A549 (cell line): ENCODE measurements at regions of chr17 and their contacts with region 1.

Region 1: DNA sequence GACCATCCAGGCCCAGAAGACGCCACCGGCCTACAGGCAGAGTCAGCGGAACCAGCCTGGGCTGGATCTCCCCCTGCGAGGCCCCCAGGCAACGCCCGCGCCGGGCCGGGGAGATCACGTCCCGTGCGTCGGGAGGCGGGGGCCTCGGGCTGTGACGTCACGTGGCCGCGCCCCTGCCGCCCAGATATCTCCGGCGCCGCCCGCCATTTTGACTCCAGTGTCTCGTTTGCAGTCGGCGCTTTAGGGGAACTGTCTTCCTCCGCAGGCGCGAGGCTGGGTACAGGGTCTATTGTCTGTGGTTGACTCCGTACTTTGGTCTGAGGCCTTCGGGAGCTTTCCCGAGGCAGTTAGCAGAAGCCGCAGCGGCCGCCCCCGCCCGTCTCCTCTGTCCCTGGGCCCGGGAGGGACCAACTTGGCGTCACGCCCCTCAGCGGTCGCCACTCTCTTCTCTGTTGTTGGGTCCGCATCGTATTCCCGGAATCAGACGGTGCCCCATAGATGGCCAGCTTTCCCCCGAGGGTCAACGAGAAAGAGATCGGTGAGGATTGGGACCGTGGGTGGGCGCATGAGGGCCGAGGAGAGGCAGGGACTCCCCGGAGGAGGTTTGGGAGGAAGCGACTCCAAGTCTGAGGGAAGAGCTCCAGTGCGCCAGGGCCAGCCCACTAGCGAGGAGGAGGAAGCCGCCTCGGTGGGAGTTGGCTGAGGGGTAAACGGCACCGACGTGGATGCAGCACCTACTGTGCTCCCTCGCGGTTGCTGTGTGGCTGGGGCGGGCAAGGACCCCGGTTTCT is at the start of gene WSB1:
- DNase-seq: peak; percentile 92 to 94
- ATAC-seq: peak; percentile 87 to 89
- H3K4me3 ChIP-seq: peak within 1 kb of the TSS; percentile 71
- H3K27ac ChIP-seq: peak within 1 kb of the TSS; percentile 88 to 94
- H3K4me1 ChIP-seq: peaks cover 25% of the 10 kb centered on the region
- CTCF ChIP-seq: no peak
- EP300 ChIP-seq: no peak
- POLR2A ChIP-seq: peak; percentile 98
- RAD21 ChIP-seq: peak in 1 of 2 experiments; percentile 18; a peak in 1 of 5 replicates
- polyA plus RNA-seq, gene WSB1: 107 and 111 TPM in 2 replicates

Region 2: GRCh38 chr17:27245230-27245696 is 48.8 kb before region 1 on chr17:
- CTCF ChIA-PET with region 1: interaction called, 34 read pairs
- POLR2A ChIA-PET with region 1: interaction called, 57 read pairs
- DNase-seq: peak; percentile 90 to 95
- ATAC-seq: peak; percentile 87 to 95
- H3K4me3 ChIP-seq: no peak overlapping the region
- H3K27ac ChIP-seq: peak overlapping the region; percentile 72 to 85
- H3K4me1 ChIP-seq: peaks cover 61% of the 10 kb centered on the region
- CTCF ChIP-seq: peak; percentile 87
- EP300 ChIP-seq: no peak
- POLR2A ChIP-seq: no peak
- RAD21 ChIP-seq: peak; percentile 96 to 99

Region 3: DNA sequence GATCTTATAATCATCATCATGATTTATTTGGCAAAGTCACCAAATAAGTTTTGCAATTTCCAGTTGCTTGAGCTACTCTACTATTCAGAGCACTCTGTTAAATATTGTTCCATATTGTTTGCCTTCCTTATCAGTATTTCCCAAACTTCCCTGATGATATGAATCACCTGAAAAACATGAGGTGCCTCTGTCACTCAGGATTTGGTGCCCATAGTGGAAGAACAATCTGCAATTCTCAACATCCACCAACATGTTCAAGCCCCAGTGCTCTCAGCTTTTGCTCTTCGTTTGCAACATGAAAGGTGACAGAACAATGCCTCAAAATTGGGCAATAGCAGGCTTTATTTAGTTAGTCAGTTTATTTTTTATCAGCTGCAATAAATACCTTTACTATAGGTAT is 28.8 kb before region 1 on chr17:
- CTCF ChIA-PET with region 1: interaction called, 6 read pairs
- POLR2A ChIA-PET with region 1: interaction called, 17 read pairs
- DNase-seq: peak; percentile 53 to 64
- ATAC-seq: peak; percentile 66 to 88; a peak in 5 of 6 replicates
- H3K4me3 ChIP-seq: no peak overlapping the region
- H3K27ac ChIP-seq: peak overlapping the region in 1 of 2 experiments; percentile 49; a peak in 3 of 6 replicates
- H3K4me1 ChIP-seq: peaks cover 19% of the 10 kb centered on the region
- CTCF ChIP-seq: no peak
- EP300 ChIP-seq: peak in 1 of 2 experiments; percentile 19; a peak in 1 of 5 replicates
- POLR2A ChIP-seq: no peak
- RAD21 ChIP-seq: no peak

Region 4: DNA sequence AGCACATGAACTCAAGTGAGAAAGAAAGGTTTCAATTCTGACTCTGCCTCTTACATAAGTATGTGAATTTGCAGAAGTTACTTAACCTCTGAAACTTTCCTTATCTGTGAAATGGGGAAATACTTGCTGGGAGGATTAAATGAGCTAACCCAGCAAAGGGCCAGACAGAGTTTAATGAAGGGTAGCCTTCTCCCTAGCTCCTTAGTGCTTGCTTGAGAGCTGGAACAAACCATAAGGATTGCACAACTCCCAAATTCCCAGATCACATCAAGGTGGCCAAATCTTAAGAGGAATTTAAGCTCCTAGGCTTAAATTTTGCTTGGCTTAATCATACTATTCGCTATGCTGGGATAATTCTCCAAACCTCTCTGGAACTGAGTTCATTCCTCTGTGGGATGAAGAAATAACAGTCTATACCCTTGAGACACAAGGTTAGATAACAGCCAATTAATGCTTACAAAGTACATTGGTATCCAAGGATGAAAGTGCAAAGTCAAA is 12.0 kb before region 1 on chr17:
- CTCF ChIA-PET with region 1: interaction called, 9 read pairs
- POLR2A ChIA-PET with region 1: interaction called, 20 read pairs
- DNase-seq: no peak
- ATAC-seq: no peak
- H3K4me3 ChIP-seq: no peak overlapping the region
- H3K27ac ChIP-seq: no peak overlapping the region
- H3K4me1 ChIP-seq: no peaks in the 10 kb centered on the region
- CTCF ChIP-seq: no peak
- EP300 ChIP-seq: no peak
- POLR2A ChIP-seq: no peak
- RAD21 ChIP-seq: no peak

Region 5: GRCh38 chr17:27306276-27306835 is 12.3 kb after region 1 on chr17:
- CTCF ChIA-PET with region 1: interaction called, 22 read pairs
- POLR2A ChIA-PET with region 1: interaction called, 26 read pairs
- DNase-seq: no peak
- ATAC-seq: no peak
- H3K4me3 ChIP-seq: no peak overlapping the region
- H3K27ac ChIP-seq: no peak overlapping the region
- H3K4me1 ChIP-seq: peaks cover 23% of the 10 kb centered on the region
- CTCF ChIP-seq: no peak
- EP300 ChIP-seq: no peak
- POLR2A ChIP-seq: no peak
- RAD21 ChIP-seq: no peak

Region 6: DNA sequence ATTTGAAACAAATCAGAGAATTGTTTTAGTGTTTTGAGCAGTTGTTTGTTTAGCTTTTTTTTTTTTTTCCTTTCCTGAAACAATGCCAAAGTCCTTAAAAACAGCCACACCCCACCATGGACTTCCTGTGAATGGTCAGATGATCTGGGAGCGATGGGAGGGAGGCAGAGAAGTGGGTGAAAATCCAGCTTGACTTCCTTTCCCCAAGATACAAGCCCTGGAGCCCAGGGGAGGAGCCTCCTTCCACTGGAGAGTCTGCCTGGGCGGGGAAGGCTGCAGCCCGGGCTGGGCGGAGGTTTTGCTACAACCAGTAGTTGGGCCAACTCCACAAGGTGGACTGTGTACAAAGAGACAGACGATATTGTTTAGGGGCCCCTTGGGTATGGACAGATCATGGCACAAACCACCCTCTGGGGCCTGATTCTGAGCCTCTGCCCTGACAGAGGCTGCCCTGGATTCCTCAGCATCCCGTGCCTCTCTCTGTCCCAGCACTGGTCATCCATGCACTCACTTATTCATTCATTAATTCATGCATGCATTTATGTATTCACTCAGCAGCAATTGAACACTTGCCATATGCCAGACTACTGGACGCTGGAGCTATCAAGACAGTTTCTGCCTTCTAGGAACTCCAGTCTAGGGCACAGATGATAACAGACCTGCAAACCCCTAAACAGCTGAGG is 29.6 kb after region 1 on chr17:
- CTCF ChIA-PET with region 1: interaction called, 6 read pairs
- POLR2A ChIA-PET with region 1: interaction called, 13 read pairs
- DNase-seq: peak in 1 of 2 experiments; percentile 69
- ATAC-seq: peak; percentile 31 to 70; a peak in 5 of 6 replicates
- H3K4me3 ChIP-seq: no peak overlapping the region
- H3K27ac ChIP-seq: peak overlapping the region in 1 of 2 experiments; percentile 12; a peak in 2 of 6 replicates
- H3K4me1 ChIP-seq: peaks cover 11% of the 10 kb centered on the region; the same call in 2 of the 3 replicates
- CTCF ChIP-seq: no peak
- EP300 ChIP-seq: no peak
- POLR2A ChIP-seq: no peak
- RAD21 ChIP-seq: no peak

Region 7: GRCh38 chr17:28346746-28347246 is 1052.7 kb after region 1 on chr17:
- CTCF ChIA-PET with region 1: no interaction called
- POLR2A ChIA-PET with region 1: no interaction called
- DNase-seq: peak in 1 of 2 experiments; percentile 48
- ATAC-seq: peak in 1 of 2 experiments; percentile 30; a peak in 2 of 6 replicates
- H3K4me3 ChIP-seq: no peak overlapping the region
- H3K27ac ChIP-seq: no peak overlapping the region
- H3K4me1 ChIP-seq: no peaks in the 10 kb centered on the region
- CTCF ChIP-seq: peak; percentile 10; the same call in 1 of the 3 replicates
- EP300 ChIP-seq: no peak
- POLR2A ChIP-seq: no peak
- RAD21 ChIP-seq: peak; percentile 27 to 37; a peak in 2 of 5 replicates